ENCODE measurements at regions of chr11 and their contacts with region 1.

Region 1: DNA sequence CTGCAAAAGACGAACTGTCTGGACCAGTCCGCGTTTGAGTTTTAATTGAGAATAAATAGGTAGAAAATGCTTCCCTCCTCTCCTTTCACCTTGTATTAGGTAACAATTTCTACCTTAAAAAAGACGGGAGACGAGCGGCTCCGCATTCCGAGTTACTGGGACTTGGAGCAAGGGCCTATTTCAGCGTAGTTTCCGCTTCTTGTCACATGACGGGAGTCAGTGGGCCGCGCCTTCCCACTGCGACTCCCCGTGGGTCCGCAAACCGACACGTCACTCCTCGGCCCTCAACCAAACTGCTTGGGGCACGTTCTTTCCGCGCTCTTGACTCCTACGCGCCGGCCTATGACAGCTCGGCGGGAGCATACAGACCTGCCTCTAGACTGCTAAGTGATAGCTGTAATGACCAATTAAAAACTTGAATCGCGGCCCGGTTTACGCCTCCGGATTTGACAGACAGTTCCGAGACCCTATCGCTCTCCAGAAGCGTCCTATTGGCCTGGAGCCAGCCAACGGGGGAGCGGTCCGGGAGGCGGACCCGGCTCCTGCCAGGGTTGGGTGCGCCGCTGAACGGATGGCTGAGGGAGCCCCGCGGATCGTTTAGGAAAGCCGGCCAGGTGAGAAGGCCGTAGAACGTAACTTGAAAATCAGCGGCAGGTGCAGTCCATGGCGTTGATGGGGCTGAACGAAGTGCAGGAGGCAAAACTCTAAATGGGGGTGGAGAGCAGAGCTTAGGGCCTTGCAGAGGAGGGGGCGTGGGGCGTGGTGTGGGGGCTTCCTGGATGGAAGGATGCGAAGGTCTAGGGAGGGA is at the start of gene STT3A:
- DNase-seq: peak; percentile 99 to 100 (median 100)

Region 2: GRCh38 chr11:124953753-124954589 is 638.5 kb before region 1 on chr11 and contains the start of gene CCDC15:
- intact Hi-C with region 1: loop called (anchors 10 kb)
- DNase-seq: peak; percentile 95 to 100 (median 99)

Region 3: DNA sequence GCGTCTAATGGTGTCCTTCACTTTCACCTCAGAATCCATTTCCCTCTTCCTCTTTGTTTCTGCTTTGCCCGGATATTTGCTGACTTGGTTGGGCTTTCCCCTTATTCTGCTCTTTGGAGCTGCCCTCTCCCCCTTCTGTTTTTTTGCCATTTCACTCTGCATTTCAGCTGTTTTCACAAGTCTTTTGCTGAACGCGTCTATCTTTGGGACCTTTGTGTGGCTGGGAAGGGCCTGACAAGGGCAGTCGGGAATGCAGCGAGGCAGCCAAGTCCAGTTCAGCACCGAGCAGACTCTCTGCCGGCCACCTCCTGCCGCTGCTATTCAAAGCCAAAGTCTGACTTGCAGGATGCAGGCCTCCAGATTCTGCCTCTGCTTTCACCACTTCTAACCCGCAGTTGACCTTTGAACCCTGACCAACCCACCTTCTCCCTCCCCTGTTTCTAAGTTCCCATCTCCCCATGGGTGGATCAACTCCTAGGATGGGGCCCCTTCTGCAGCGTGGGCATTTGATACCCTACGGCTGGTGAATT is 134.6 kb before region 1 on chr11:
- intact Hi-C with region 1: no loop called
- DNase-seq: peak; percentile 58 to 95 (median 73)

Region 4: DNA sequence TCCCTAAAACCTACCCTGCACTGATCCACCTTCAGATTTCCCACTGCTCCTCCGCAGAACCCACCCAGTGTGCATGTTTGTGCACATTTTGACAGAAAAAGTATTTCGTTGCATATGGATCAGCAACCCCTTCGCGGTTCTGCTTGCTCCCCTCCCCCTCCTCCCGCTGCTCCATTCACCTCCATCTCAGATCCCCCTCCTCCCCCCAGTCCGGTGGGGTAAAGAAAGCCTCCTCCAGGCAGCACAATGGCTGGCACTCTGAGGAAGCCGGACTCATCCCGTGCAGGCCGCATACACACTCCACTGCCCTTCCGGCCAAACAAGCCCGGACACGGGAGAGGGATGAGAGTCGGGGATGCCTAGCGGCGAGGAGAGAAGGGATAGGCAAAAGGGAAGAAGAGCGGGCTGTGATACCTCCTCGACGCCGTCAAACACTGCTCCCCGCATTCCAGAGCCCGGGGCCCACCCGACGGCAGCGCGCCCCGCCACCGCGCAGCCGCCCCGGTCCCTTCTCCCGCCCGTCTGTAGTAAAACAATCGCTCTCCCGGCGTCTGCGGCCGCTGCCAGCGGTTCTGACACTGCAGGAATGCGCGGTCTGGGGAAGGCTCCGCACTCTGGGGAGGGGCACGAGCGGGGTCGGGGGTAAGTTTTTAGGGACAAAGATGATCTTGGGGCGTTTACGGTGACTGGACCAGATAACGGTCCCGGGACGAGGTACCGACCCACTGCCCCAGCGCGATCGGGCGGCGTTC is 97.4 kb before region 1 on chr11:
- intact Hi-C with region 1: loop called (anchors 5 kb)
- DNase-seq: peak; percentile 46 to 93 (median 57)

Region 5: GRCh38 chr11:125568970-125569914 is 23.3 kb before region 1 on chr11 and contains the start of gene EI24:
- intact Hi-C with region 1: loop called (anchors 1 kb)
- DNase-seq: peak; percentile 80 to 99 (median 92)

Region 6: DNA sequence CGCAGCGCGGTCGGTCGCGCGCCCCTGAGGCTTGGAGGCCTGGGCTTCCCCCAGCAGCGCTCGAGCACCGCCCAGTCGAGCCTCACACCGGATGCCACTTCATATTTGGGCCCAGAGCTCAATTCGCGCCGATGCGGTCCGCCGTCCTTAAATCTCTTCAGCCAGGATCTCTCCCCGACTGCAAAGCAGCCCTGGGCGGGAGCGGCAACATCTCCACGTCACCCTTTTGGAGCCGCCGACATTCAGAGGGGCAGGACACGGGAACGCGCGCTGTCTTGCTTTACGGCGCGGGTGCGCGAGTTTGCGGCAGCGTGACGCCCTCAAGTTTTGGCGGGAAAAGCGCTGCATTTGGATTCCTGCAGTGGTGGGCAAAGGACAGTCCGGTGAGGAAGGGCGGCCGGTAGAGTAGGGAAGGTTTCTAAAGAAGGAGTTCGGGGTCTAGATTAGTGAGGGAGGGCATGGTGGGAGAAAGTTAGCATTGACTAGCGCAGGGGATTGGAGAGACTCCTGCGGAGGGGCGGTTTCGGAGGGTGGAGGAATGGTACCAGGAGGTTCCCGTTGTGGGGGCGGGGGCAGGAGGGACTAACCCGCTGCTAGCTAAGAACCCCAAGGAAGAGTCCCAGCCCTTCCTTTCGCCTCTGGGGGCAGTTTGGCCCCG is 33.2 kb after region 1 on chr11:
- intact Hi-C with region 1: loop called (anchors 1 kb)
- DNase-seq: peak; percentile 84 to 98 (median 90)

Measured in posterior cingulate gyrus (tissue), 11 donors.